ENCODE measurements at regions of chr1 and their contacts with region 1.

Region 1: DNA sequence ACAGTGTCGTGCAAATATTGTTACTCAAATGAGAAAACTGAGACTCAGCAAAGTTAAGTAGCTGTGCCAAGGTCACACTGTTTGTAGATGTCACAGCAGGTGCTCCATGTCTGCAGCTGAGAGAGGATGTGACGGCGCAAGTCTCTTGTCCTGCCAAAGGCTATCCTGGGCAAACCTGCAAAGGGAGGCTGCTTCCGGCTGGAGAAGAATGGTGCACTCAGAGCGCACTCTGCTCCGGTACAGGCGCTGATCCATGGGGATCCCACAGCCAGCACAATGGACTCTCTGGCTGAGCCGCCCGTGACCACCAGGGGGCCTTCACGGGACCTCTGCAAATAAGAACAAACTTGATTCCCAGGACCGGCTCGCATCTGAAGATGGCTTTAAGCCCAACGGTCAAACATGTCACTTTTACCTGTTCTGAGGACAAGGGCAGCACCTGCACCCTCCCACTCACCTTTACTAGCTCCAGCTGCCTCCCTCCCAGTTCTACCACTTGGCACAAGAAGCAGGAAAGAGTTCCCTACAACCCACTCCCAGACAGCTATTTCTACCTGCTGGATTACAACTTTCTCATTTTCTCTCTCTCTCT is 21.9 kb downstream of the RD3 start:
- H3K4me3 ChIP-seq: no peak overlapping the region
- H3K27ac ChIP-seq: no peak overlapping the region
- H3K4me1 ChIP-seq: no peaks in the 10 kb centered on the region
- CTCF ChIP-seq: peak; percentile 80

Region 2: DNA sequence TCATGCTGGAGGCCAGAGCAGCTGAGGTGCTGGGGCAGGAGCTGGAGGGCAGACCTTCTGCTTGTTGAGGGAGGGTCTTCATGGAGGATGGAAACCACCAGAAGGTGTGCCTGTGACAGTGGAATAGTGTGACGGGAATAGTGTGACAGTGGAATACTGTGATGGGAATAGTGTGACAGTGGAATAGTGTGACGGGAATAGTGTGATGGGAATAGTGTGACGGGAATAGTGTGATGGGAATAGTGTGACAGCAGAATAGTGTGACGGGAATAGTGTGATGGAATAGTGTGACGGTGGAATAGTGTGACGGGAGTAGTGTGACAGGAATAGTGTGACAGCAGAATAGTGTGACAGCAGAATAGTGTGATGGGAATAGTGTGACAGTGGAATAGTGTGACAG is 816.3 kb before region 1 on chr1:
- CTCF ChIA-PET with region 1: no interaction called
- POLR2A ChIA-PET with region 1: no interaction called
- H3K4me3 ChIP-seq: no peak overlapping the region
- H3K27ac ChIP-seq: no peak overlapping the region
- H3K4me1 ChIP-seq: no peaks in the 10 kb centered on the region
- CTCF ChIP-seq: no peak

Region 3: GRCh38 chr1:211329764-211330201 is 140.3 kb before region 1 on chr1:
- CTCF ChIA-PET with region 1: interaction called, 10 read pairs
- POLR2A ChIA-PET with region 1: interaction called, 3 read pairs
- H3K4me3 ChIP-seq: no peak overlapping the region
- H3K27ac ChIP-seq: no peak overlapping the region
- H3K4me1 ChIP-seq: peaks cover 6% of the 10 kb centered on the region
- CTCF ChIP-seq: no peak

Region 4: GRCh38 chr1:211484755-211485479 is 14.9 kb after region 1 on chr1:
- CTCF ChIA-PET with region 1: interaction called, 45 read pairs
- POLR2A ChIA-PET with region 1: no interaction called
- H3K4me3 ChIP-seq: no peak overlapping the region
- H3K27ac ChIP-seq: no peak overlapping the region
- H3K4me1 ChIP-seq: no peaks in the 10 kb centered on the region
- CTCF ChIP-seq: no peak

Region 5: GRCh38 chr1:211501711-211502400 is 31.8 kb after region 1 on chr1:
- CTCF ChIA-PET with region 1: interaction called, 10 read pairs
- POLR2A ChIA-PET with region 1: no interaction called
- H3K4me3 ChIP-seq: no peak overlapping the region
- H3K27ac ChIP-seq: no peak overlapping the region
- H3K4me1 ChIP-seq: no peaks in the 10 kb centered on the region
- CTCF ChIP-seq: no peak

Region 6: DNA sequence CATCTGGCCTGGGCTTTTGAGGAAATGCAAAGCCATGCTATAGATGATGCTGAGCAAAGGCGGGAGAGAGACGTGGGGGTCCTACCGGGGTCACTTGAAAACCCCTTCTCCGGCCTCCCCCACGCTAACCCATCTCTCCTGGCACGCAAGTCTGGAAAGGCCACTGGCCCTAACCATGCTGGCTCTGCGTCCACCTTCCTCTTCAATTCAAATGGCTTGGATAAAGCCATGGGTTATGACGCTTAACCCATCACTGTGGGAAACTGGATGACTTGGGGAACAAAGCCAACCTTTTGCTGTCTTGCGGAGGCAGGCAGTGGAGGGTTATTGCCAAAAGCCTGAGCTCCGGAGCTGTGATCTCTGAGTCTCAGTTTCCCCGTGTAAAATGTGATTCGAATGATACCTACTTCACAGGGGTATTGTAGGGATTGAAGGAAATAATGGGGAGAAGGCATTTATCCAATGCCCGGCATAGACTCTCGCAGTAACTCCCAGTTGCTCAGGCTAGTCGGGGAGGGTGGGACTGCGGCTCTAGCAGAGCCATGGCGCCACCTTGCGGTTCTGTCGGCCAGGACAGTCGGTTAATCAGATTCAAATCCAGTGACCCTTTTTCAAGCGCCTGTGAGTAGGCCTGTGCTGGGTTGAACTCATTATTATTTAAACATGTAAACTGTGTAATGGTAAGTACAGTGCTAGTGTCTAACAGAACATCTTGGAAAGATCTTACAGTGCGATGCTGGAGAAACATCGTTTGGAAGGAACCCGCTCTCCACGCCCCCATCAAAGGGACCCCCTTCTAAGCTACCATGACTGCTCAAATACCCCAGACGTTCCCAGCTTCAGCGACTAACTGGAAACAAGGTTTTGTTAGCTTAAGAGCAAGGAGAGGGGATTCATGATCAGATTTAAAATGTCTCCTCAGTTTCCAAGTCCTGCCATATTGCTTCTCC is 185.1 kb after region 1 on chr1:
- CTCF ChIA-PET with region 1: interaction called, 26 read pairs
- POLR2A ChIA-PET with region 1: no interaction called
- H3K4me3 ChIP-seq: no peak overlapping the region
- H3K27ac ChIP-seq: no peak overlapping the region
- H3K4me1 ChIP-seq: 0 out of 2 replicates have a peak, but pooled peaks cover 4% of the 10 kb centered on the region
- CTCF ChIP-seq: peak; percentile 80

Region 7: DNA sequence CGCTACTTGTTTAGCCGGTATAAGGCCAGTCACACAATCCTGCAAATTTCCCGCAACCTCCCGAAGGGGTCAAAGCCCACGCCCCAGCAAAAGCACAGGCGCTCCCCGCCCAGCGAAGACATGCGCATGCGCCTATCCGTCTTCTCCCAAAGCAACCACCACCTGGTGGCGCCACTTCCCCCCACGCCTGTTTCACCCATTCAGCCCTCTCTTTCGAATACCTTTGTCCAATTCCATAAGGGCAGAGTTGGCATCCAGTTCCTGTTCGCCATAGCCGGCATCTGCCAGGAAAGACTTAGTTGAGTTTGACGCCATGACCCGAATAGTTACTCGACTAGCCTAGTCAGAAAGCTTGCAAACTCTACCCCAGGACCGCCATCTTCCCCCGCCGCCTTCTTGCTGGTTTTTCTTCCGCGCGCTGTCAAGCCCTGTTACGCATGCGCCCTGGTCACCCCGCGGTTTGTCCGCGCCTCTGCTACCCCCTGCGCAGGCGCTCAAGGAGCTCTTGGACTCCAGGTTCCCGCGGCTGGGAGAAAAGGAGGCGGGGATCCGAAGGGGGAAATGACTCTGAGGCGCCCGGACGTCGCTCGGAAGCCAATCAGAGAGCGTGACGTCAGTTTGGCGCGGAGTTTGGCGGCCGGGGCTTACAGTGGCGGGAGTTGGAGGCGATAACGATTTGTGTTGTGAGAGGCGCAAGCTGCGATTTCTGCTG is 565.2 kb after region 1 on chr1 and contains the starts of genes DTL and INTS7:
- CTCF ChIA-PET with region 1: no interaction called
- POLR2A ChIA-PET with region 1: no interaction called
- H3K4me3 ChIP-seq: peak within 1 kb of the TSS; percentile 91
- H3K27ac ChIP-seq: peak within 1 kb of the TSS; percentile 68
- H3K4me1 ChIP-seq: peaks cover 3% of the 10 kb centered on the region; the same call in 1 of the 2 replicates
- CTCF ChIP-seq: peak; percentile 100

Measured in HEK293 (cell line).